ENCODE measurements at regions of chr14 and their contacts with region 1.

Region 1: DNA sequence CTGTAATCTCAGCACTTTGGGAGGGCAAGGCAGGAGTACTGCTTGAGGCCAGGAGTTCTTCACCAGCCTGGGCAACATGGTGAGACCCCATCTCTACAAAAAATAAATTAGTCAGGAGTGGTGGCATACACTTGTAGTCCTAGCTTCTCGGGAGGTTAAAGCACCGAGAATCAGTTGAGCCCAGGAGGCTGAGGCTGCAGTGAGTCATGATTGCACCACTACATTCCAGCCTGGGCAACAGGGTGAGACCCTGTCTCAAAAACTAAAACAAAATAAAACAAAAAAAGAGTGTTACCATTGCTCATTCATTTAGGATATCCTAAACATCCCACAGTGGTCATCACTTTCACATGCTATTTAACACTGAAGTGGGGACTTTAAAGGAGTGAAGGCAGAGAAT is 7.8 kb downstream of the NEK9 start:
- DNase-seq: no peak
- H3K4me3 ChIP-seq: no peak overlapping the region
- H3K27ac ChIP-seq: no peak overlapping the region
- H3K4me1 ChIP-seq: peaks cover 23% of the 10 kb centered on the region
- H3K27me3 ChIP-seq: no peaks in the 10 kb centered on the region
- CTCF ChIP-seq: no peak

Region 2: DNA sequence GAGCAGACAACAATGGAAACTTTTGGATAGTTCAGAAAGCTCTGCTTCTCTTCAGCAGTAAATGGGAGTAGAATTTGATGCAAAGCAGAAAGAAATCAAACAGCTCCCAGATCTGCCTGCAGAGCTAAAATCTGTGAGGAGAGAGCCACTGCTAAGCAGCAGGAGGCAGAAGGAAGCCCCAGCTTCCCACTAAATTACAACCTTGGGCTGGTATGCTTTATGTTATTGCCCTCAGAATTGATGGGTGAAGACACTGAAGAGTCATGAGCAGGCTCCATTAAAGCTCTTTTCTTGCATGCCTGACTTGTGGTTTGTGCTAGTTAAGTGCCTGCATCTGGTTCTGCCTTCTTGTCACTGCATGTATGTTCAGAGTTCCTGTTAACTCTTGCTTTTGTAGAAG is 41.3 kb before region 1 on chr14:
- CTCF ChIA-PET with region 1: no interaction called
- POLR2A ChIA-PET with region 1: interaction called, 12 read pairs
- intact Hi-C with region 1: no loop called
- DNase-seq: no peak
- H3K4me3 ChIP-seq: no peak overlapping the region
- H3K27ac ChIP-seq: no peak overlapping the region
- H3K4me1 ChIP-seq: no peaks in the 10 kb centered on the region
- H3K27me3 ChIP-seq: no peaks in the 10 kb centered on the region
- CTCF ChIP-seq: no peak

Region 3: DNA sequence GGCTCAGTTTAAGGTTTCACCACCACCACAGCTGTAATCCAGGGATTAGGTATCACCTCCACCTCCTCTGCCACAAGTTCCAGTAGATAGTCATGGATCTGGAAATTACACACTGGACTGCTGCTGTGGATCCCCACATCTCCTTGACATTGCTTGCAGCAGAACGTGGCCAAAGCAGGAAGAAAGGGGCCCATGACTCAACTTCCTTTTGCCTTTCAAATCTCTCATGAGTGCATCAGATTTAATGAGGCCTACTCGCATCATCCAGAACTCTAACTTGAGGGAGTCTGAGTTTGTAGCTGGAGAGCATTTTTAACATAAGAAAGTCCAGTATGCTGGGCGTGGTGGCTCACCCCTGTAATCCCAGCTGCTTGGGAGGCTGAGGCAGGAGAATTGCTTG is 86.5 kb after region 1 on chr14:
- CTCF ChIA-PET with region 1: no interaction called
- POLR2A ChIA-PET with region 1: no interaction called
- intact Hi-C with region 1: no loop called
- DNase-seq: peak in 1 of 2 experiments; percentile 72
- H3K4me3 ChIP-seq: no peak overlapping the region
- H3K27ac ChIP-seq: peak overlapping the region; percentile 42
- H3K4me1 ChIP-seq: peaks cover 54% of the 10 kb centered on the region
- H3K27me3 ChIP-seq: no peaks in the 10 kb centered on the region
- CTCF ChIP-seq: no peak

Measured in PC-9 (cell line).